ENCODE measurements at regions of chr19 and their contacts with region 1.

Region 1: DNA sequence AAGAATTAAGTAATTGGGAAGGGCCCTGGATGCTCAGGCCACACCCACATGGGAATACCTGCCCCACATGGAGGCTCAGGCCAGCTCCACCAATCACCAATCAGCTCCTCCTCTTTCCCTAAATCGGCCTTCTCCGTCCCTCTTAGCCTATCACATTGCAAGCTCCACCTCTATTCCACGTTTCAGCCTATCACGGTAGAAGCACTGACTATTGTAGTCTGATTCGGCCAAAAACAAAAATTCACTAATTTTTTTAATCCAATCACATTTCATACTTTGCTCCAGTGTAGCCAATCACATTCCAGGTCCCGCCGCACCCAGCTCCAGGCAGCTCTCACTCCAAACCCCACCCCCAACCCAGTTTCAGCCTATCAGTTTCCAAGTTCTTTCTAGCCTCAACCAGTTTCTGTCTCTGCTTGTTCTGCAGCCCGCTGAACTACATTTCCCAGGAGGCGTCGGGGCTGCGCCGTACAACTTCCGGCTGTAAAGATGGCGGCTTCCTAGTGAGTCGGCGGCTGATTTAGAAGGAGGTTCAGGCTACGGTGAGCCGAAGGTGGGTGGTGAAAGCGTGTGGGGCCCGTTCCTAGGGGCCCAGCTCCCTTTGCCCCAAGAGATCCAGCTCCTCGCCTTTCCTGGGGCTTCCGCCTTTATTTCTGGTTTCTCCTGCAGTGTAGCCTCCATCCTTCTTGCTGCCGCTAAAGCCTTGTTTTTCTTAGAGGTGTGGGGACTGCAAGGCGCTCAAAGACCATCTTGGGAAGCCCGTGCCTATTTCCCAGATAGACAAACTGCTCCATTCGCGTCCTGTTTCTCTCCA is at the start of gene BABAM1:
- DNase-seq: peak; percentile 98
- CTCF ChIP-seq: no peak

Region 2: DNA sequence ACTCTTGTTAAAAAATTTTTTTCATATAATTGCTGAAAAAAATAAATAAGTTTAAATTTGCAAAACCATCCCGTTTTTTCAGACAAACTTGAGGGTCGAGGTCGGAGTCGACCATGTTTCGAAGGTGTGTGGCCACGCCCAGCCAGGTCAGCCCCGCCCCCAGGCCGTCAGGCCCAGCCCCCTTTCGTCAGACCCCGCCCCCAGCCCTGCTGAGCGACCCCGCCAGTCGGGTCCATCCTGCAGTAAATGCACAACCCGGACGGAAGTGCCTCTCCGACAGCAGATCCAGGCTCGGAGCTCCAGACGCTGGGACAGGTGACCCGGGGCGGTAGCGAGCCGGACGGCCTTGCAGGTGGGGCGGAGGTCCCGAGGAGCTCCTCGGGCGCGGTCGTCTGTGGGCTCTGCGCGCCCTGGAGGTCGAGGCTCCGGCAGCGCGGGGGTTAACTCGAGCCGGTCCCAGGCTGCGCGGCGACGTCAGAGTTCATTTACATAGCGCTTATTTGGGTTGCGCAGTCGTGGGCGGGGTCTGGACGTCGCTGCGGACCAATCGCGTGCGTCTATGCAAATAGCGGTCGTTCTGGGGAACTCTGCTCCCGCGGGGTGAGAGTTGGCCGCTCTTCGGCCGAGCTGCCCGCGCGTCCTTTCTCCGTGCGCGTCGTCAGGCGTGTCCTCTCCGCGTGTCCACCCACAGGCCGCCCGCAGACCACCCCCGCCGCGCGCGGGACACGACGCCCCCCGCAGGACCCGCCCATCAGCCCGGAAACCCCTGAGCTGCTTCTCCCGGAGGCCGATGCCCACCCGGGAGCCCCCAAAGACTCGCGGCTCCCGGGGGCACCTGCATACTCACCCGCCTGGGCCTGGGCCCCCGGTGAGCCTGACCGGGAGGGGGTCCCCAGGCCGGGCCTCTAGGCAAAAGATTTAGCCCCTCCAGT is 40.9 kb before region 1 on chr19 and contains the start of gene OCEL1:
- CTCF ChIA-PET with region 1: no interaction called
- POLR2A ChIA-PET with region 1: interaction called, 11 read pairs
- DNase-seq: peak; percentile 95
- CTCF ChIP-seq: no peak